Caco-2 (cell line): ENCODE measurements at regions of chr2 and their contacts with region 1.

Region 1: DNA sequence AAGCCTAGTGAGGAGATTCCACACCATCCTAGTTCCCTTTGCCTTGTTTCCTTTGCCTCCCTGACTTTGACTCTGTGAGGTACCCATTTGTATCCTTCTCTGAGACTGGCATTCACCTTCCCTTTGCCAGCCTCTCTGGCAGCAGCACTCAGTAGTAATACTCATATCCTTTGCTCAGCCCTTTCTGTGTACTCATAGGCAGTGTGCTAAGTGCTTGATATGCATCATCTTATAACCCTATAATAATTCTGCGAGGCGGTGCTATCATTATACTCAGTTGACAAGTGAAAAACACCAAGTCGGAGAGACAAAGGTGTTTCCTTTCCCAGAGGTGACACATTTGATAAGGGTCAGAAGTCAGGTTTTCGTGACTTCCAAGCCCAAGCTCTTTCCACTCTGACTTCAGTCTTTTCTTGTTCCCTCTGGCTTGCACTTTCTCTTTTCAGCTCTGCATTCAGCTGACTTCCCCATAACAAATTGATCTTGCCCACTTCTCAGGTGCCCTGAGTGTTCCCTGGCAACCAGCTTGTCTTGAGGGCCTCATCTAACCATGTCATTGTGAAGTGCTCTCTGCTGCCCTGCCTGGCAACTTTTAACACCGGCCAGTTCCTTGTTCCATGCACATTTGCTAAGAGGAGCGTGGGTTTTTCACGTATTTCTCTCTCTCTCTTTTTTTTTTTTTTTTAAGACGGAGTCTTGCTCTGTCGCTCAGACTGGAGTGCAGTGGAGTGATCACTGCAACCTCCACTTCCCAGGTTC is 94.5 kb upstream of the UPP2 start:
- DNase-seq: no peak
- H3K4me3 ChIP-seq: no peak overlapping the region
- H3K4me3 Mint-ChIP-seq: no peak overlapping the region
- H3K27ac Mint-ChIP-seq: no peak overlapping the region
- H3K4me1 ChIP-seq: peaks cover 4% of the 10 kb centered on the region; the same call in 1 of the 2 replicates
- H3K4me1 Mint-ChIP-seq: no peaks in the 10 kb centered on the region
- H3K27me3 ChIP-seq: no peaks in the 10 kb centered on the region
- H3K27me3 Mint-ChIP-seq: no peaks in the 10 kb centered on the region
- CTCF ChIP-seq: peak in 1 of 2 experiments; percentile 7

Region 2: DNA sequence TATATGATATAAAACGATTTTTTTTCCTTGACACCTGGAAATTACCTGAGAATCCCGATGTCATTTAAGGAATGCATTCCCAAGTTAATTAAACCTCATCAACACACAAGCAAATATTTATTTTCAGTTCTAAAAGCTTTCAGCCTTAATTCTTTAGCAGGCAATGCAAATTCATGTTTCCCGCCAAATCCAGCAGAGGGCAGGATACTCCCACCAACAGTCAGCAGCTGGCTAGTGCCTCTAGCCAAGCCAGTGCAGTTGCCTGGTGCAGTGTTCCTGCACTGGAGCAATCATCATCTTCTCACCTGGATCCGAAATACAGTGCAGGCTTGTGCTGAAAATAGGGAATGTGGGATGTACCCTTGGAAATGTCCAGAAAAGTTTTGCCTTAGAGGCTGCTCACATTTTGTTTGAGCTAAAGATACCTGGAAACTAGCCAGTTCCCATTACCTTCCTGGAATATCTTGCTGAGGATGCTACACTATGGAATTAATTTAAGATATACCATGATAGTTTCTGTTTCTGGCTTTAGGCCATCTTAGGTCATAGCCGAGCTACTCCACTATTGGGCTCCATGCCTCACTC is 514.9 kb before region 1 on chr2:
- CTCF ChIA-PET with region 1: interaction called, 3 read pairs
- POLR2A ChIA-PET with region 1: no interaction called
- intact Hi-C with region 1: loop called (anchors 1 kb)
- DNase-seq: peak; percentile 63 to 74
- H3K4me3 ChIP-seq: no peak overlapping the region
- H3K4me3 Mint-ChIP-seq: no peak overlapping the region
- H3K27ac Mint-ChIP-seq: no peak overlapping the region
- H3K4me1 ChIP-seq: no peaks in the 10 kb centered on the region
- H3K4me1 Mint-ChIP-seq: no peaks in the 10 kb centered on the region
- H3K27me3 ChIP-seq: no peaks in the 10 kb centered on the region
- H3K27me3 Mint-ChIP-seq: no peaks in the 10 kb centered on the region
- CTCF ChIP-seq: peak; percentile 78 to 87

Region 3: GRCh38 chr2:157497638-157498314 is 509.4 kb before region 1 on chr2:
- CTCF ChIA-PET with region 1: no interaction called
- POLR2A ChIA-PET with region 1: no interaction called
- intact Hi-C with region 1: loop called (anchors 1 kb)
- DNase-seq: peak in 1 of 2 experiments; percentile 14
- H3K4me3 ChIP-seq: no peak overlapping the region
- H3K4me3 Mint-ChIP-seq: no peak overlapping the region
- H3K27ac Mint-ChIP-seq: no peak overlapping the region
- H3K4me1 ChIP-seq: no peaks in the 10 kb centered on the region
- H3K4me1 Mint-ChIP-seq: no peaks in the 10 kb centered on the region
- H3K27me3 ChIP-seq: no peaks in the 10 kb centered on the region
- H3K27me3 Mint-ChIP-seq: no peaks in the 10 kb centered on the region
- CTCF ChIP-seq: peak; percentile 65 to 78

Region 4: GRCh38 chr2:157628477-157629415 is 378.4 kb before region 1 on chr2 and contains the start of gene ACVR1C:
- CTCF ChIA-PET with region 1: no interaction called
- POLR2A ChIA-PET with region 1: no interaction called
- intact Hi-C with region 1: loop called (anchors 1 kb)
- DNase-seq: peak; percentile 77 to 87
- H3K4me3 ChIP-seq: peak within 1 kb of the TSS; percentile 70
- H3K4me3 Mint-ChIP-seq: peak within 1 kb of the TSS; percentile 85
- H3K27ac Mint-ChIP-seq: no peak within 1 kb of the TSS
- H3K4me1 ChIP-seq: 0 out of 2 replicates have a peak, but pooled peaks cover 3% of the 10 kb centered on the region
- H3K4me1 Mint-ChIP-seq: peaks cover 6% of the 10 kb centered on the region
- H3K27me3 ChIP-seq: peaks cover 1% of the 10 kb centered on the region; the same call in 1 of the 2 replicates
- H3K27me3 Mint-ChIP-seq: peaks cover 20% of the 10 kb centered on the region
- CTCF ChIP-seq: peak; percentile 72 to 74
- total RNA-seq, gene ACVR1C: 2.0 and 2.1 TPM in 2 replicates

Region 5: GRCh38 chr2:157777427-157777826 is 229.7 kb before region 1 on chr2:
- CTCF ChIA-PET with region 1: interaction called, 5 read pairs
- POLR2A ChIA-PET with region 1: no interaction called
- intact Hi-C with region 1: loop called (anchors 1 kb)
- DNase-seq: peak in 1 of 2 experiments; percentile 49
- H3K4me3 ChIP-seq: no peak overlapping the region
- H3K4me3 Mint-ChIP-seq: no peak overlapping the region
- H3K27ac Mint-ChIP-seq: no peak overlapping the region
- H3K4me1 ChIP-seq: no peaks in the 10 kb centered on the region; the same call in 1 of the 2 replicates
- H3K4me1 Mint-ChIP-seq: no peaks in the 10 kb centered on the region
- H3K27me3 ChIP-seq: no peaks in the 10 kb centered on the region
- H3K27me3 Mint-ChIP-seq: no peaks in the 10 kb centered on the region
- CTCF ChIP-seq: peak; percentile 68

Region 6: GRCh38 chr2:157876066-157876787 is 130.9 kb before region 1 on chr2 and contains the start of gene ACVR1:
- CTCF ChIA-PET with region 1: no interaction called
- POLR2A ChIA-PET with region 1: no interaction called
- intact Hi-C with region 1: loop called (anchors 1 kb)
- DNase-seq: peak; percentile 92 to 95
- H3K4me3 ChIP-seq: peak within 1 kb of the TSS; percentile 94
- H3K4me3 Mint-ChIP-seq: peak within 1 kb of the TSS; percentile 91
- H3K27ac Mint-ChIP-seq: peak within 1 kb of the TSS; percentile 66
- H3K4me1 ChIP-seq: 0 out of 2 replicates have a peak, but pooled peaks cover 10% of the 10 kb centered on the region
- H3K4me1 Mint-ChIP-seq: peaks cover 6% of the 10 kb centered on the region
- H3K27me3 ChIP-seq: no peaks in the 10 kb centered on the region
- H3K27me3 Mint-ChIP-seq: no peaks in the 10 kb centered on the region
- CTCF ChIP-seq: no peak
- total RNA-seq, gene ACVR1: 11.1 and 11.3 TPM in 2 replicates

Region 7: DNA sequence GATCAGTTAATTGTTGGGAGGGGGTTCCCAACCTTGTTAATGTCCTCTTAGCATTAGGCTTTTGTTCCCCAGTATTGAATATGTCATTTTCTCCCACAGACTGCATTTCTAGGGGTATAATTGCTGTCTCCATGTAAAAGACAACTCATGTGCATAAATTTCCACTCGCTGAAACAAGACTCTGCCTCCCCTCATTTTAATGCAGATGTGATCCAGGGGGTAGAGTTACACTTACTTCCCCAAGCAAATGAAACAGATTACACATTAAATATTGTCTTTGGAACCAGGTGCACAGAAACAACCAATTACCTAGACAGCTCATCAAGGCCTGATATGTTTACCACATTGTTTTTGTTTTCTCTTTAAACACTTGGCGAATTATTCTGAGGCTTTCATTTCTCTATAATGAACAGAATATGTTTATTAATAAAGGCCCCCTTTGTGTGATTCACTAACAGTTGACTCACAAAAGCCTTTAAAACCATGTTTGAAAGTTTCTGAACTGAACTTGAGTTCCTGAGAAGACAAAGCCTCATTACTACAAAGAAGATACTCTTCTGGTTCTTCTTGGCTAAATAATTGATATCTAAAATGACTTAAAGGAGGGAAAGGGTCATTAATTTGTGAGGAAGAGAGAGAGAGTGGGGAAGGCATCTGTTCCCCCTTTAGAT is 116.0 kb before region 1 on chr2:
- CTCF ChIA-PET with region 1: no interaction called
- POLR2A ChIA-PET with region 1: no interaction called
- intact Hi-C with region 1: no loop called
- DNase-seq: no peak
- H3K4me3 ChIP-seq: no peak overlapping the region
- H3K4me3 Mint-ChIP-seq: no peak overlapping the region
- H3K27ac Mint-ChIP-seq: no peak overlapping the region
- H3K4me1 ChIP-seq: no peaks in the 10 kb centered on the region
- H3K4me1 Mint-ChIP-seq: no peaks in the 10 kb centered on the region
- H3K27me3 ChIP-seq: no peaks in the 10 kb centered on the region
- H3K27me3 Mint-ChIP-seq: peaks cover 10% of the 10 kb centered on the region
- CTCF ChIP-seq: no peak

Region 8: GRCh38 chr2:157901325-157901724 is 105.8 kb before region 1 on chr2:
- CTCF ChIA-PET with region 1: interaction called, 3 read pairs
- POLR2A ChIA-PET with region 1: no interaction called
- intact Hi-C with region 1: loop called (anchors 1 kb)
- DNase-seq: no peak
- H3K4me3 ChIP-seq: no peak overlapping the region
- H3K4me3 Mint-ChIP-seq: no peak overlapping the region
- H3K27ac Mint-ChIP-seq: no peak overlapping the region
- H3K4me1 ChIP-seq: no peaks in the 10 kb centered on the region
- H3K4me1 Mint-ChIP-seq: no peaks in the 10 kb centered on the region
- H3K27me3 ChIP-seq: no peaks in the 10 kb centered on the region
- H3K27me3 Mint-ChIP-seq: no peaks in the 10 kb centered on the region
- CTCF ChIP-seq: peak in 1 of 2 experiments; percentile 49

Region 9: DNA sequence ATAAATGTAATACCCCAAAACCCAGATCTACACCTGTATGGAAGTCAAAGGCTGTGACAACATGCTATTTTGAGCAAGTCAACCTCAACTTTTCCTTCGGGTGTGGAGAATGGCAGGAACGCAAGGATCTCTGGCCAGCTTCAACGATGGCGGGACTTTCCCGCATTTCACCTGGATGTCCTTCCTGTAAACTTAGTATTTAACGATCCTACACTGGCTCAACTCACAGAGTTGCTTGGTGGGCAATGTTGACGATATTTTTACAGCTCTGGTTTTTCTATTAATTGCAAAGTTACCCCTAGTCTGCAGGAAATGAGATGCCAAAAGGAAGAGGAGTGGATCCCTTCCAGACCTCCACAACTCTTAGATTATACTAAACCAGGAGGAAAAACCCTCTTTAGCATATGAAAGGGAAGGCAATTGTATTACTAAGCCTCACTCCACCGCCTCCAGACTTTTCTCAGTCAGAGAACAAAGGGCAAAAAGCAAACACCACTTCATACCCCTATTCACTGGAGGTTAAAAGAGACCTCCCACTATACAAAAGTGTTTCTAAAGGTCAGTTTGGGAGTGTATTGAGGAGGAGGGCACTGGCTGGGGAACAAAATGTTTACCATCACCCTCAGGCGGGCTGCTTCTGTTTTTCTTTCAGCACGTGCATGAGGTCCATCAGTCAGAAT is 74.5 kb before region 1 on chr2:
- CTCF ChIA-PET with region 1: no interaction called
- POLR2A ChIA-PET with region 1: no interaction called
- intact Hi-C with region 1: no loop called
- DNase-seq: peak in 1 of 2 experiments; percentile 46
- H3K4me3 ChIP-seq: no peak overlapping the region
- H3K4me3 Mint-ChIP-seq: no peak overlapping the region
- H3K27ac Mint-ChIP-seq: peak overlapping the region; percentile 29
- H3K4me1 ChIP-seq: peaks cover 29% of the 10 kb centered on the region
- H3K4me1 Mint-ChIP-seq: peaks cover 38% of the 10 kb centered on the region
- H3K27me3 ChIP-seq: no peaks in the 10 kb centered on the region
- H3K27me3 Mint-ChIP-seq: no peaks in the 10 kb centered on the region
- CTCF ChIP-seq: no peak

Region 10: GRCh38 chr2:157952558-157952957 is 54.6 kb before region 1 on chr2:
- CTCF ChIA-PET with region 1: no interaction called
- POLR2A ChIA-PET with region 1: no interaction called
- intact Hi-C with region 1: no loop called
- DNase-seq: no peak
- H3K4me3 ChIP-seq: no peak overlapping the region
- H3K4me3 Mint-ChIP-seq: no peak overlapping the region
- H3K27ac Mint-ChIP-seq: no peak overlapping the region
- H3K4me1 ChIP-seq: no peaks in the 10 kb centered on the region
- H3K4me1 Mint-ChIP-seq: no peaks in the 10 kb centered on the region
- H3K27me3 ChIP-seq: no peaks in the 10 kb centered on the region
- H3K27me3 Mint-ChIP-seq: no peaks in the 10 kb centered on the region
- CTCF ChIP-seq: no peak

Region 11: DNA sequence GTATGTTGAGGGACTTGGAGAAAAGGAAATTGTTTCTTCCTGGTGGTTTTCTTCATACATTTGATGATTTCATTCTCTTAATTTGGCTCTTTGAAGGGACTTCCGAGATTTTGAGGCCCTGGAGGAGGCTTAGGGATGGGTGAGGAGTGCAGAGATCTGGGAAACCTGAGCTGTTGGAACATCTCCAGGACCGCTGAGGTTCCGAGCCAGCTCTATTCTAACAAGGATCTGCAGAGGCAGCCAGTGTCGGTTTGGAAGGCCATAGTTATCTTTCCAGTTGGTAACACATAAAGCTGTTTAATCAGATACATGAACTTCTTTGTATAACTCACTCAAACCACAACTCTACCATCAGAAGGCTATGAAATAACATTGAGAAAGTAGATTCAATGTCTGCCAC is 24.2 kb after region 1 on chr2:
- CTCF ChIA-PET with region 1: no interaction called
- POLR2A ChIA-PET with region 1: no interaction called
- intact Hi-C with region 1: no loop called
- DNase-seq: no peak
- H3K4me3 ChIP-seq: no peak overlapping the region
- H3K4me3 Mint-ChIP-seq: no peak overlapping the region
- H3K27ac Mint-ChIP-seq: no peak overlapping the region
- H3K4me1 ChIP-seq: no peaks in the 10 kb centered on the region; the same call in 1 of the 2 replicates
- H3K4me1 Mint-ChIP-seq: peaks cover 9% of the 10 kb centered on the region
- H3K27me3 ChIP-seq: no peaks in the 10 kb centered on the region
- H3K27me3 Mint-ChIP-seq: peaks cover 7% of the 10 kb centered on the region
- CTCF ChIP-seq: no peak